A673 (cell line): ENCODE measurements at regions of chr4 and their contacts with region 1.

Region 1: DNA sequence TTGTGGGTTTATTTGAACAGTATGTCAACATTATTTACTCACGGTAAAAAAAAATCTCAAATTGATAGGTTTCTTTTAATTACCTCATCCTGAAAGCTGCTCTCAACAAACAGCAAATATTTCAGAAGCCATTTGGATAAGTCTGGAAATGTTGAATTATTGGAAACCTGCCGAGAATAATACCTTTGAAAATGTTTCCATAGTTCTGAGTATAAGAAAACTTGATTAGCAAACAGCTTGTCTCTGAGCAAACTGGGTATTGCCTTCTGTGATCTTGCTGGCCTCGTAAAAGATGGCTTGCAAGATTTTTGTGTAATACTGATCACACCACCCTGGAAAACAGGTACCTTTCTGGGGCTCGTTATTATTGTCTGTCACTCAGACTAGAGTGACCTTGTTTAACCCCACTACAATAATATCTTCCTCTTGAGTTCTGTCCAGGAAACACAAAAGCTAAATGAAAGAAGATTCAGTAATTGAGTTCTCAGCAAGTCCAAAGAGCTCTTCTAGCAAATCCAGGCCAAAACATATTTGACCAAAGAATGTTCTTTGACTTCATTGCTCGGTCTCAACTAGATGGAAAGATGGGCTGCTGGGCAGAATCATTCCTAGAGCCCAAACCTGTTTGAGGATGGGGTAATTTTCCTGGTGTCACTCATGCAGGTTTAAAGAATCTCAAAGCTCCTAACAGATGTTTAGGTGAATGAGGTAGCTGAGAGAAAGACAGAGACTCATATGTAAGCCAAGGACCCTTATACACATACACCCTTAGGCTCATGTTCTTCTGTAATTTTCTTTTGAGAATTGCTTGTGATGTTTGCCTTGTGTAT is 255.6 kb upstream of the JADE1 start:
- DNase-seq: no peak
- H3K4me3 ChIP-seq: peak overlapping the region; percentile 50
- H3K27ac ChIP-seq: no peak overlapping the region
- H3K4me1 ChIP-seq: peaks cover 8% of the 10 kb centered on the region
- H3K27me3 ChIP-seq: no peaks in the 10 kb centered on the region
- CTCF ChIP-seq: no peak

Region 2: DNA sequence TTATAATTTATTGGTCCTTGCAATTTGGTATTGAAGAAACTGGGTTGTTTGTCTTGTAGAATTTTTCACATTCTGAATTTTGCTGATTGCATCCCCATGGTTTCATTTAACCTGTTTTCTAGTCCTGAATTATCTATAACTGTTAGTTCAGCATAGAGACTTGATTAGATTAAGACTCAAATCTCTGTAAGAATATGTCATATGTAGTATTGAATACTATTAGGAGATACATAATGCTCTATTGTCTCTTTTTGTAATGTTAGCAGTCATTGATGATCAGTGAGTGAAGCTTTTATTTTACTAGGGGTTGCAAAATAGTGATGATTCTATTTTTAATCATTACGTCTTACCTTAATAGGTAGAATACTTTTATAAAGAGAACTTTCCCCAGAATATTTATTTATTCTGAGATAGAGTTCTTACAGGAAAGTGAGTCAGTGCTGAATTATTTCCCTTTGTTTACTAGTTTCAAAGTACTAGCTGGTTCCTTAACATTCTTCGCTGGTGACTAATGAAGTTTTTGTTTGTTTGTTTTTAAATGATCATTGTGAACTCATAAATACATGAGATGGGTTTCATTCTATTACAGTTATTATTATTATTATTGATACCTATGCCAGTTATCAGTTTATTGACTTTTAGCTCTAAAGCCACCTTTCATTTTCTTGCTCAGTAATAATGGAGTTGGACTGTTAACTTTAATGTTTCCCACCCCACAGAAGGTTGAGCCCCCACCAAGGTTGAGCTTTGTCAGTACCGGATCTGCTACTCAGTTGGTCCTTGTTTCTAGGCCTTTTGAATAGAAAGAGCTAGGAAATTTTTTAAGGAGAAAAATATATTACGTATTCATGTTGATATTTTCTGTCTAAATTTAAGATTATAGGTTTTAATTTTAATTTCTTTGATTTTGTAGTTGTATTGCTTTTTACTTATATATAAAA is 390.5 kb before region 1 on chr4:
- CTCF ChIA-PET with region 1: no interaction called
- POLR2A ChIA-PET with region 1: no interaction called
- intact Hi-C with region 1: no loop called
- DNase-seq: peak; percentile 23
- H3K4me3 ChIP-seq: no peak overlapping the region
- H3K27ac ChIP-seq: no peak overlapping the region
- H3K4me1 ChIP-seq: no peaks in the 10 kb centered on the region
- H3K27me3 ChIP-seq: no peaks in the 10 kb centered on the region
- CTCF ChIP-seq: no peak

Region 3: DNA sequence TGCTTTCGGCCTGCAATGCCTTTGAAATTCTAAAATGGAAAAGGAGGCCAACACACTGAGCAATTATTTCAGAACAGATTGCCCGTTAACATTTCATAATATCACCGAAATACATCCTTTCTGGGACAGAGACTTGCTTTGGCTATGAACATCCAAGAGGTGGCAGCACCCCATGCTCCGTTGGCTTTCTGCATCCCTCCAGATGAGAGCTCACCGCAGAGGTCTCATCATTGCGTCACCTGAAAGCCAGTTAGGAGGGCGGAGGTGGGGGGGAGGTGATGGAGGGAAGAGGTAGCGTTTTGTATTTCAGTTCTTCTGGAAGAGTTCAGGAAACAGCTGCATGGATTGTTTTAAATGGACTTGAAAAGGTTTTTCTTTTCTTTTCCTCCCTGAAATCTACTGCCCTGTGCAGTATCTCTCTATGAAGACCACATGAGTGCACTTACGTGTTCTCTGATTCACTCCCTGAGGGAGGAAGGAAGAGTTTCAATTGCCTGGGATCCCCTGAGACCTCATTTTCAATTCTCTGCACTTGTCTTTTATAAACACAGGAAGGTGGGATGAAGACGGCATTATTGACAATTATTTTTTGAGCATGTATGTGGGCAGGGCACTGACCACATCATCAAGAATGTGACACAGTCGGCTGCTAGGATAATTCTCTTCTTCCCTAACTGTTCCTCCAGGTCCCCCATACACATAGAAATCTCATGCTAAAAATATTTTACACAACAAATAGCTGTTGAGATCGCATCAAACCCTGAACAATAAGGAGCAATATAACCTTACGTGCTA is 99.4 kb before region 1 on chr4:
- CTCF ChIA-PET with region 1: interaction called, 13 read pairs
- POLR2A ChIA-PET with region 1: no interaction called
- intact Hi-C with region 1: loop called (anchors 5 kb)
- DNase-seq: peak; percentile 88
- H3K4me3 ChIP-seq: no peak overlapping the region
- H3K27ac ChIP-seq: no peak overlapping the region
- H3K4me1 ChIP-seq: no peaks in the 10 kb centered on the region
- H3K27me3 ChIP-seq: no peaks in the 10 kb centered on the region
- CTCF ChIP-seq: peak; percentile 84